ENCODE measurements at regions of chr20 and their contacts with region 1.

Region 1: DNA sequence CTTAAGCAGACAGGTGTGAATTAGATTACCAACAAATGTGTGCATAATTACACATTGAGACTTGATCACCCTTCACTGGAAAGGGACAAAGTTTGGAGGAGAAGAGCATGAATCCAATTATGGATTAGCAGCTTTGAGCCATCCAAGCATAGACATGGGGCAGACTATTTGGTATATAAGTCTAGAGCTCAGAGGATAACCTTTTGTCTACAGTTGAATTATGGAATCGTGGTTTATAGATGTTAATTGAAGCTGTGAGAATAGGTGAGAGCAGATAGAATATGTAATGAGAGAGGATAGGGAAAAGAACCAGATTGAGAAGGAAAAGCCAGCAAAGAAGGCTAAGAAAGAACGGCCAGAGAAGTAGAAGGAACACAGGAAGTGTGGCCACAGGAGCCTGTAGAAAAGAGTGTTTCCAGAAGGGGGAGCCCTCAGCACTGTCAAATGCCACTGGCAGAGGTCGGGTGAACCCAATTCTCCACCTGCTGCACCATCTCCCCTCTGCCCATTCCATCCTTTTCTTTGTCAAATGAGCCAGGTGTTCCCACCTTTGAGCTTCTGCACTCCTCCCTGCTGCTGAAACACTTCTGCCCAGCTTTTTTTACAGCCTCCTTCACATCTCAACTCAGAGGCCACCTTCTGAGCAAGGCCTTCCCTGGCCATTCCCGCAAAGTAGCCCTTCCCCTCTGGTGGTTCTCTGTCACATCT is 7.3 kb downstream of the DNTTIP1 start:
- DNase-seq: peak; percentile 83
- ATAC-seq: peak; percentile 99
- H3K4me3 Mint-ChIP-seq: no peak overlapping the region
- H3K27ac Mint-ChIP-seq: peak overlapping the region; percentile 22
- H3K4me1 Mint-ChIP-seq: peaks cover 6% of the 10 kb centered on the region
- H3K27me3 Mint-ChIP-seq: no peaks in the 10 kb centered on the region
- CTCF ChIP-seq: peak; percentile 79

Region 2: GRCh38 chr20:45752746-45753145 is 46.3 kb before region 1 on chr20:
- CTCF ChIA-PET with region 1: no interaction called
- POLR2A ChIA-PET with region 1: no interaction called
- intact Hi-C with region 1: no loop called
- DNase-seq: peak; percentile 54
- ATAC-seq: peak; percentile 79
- H3K4me3 Mint-ChIP-seq: no peak overlapping the region
- H3K27ac Mint-ChIP-seq: peak overlapping the region; percentile 53
- H3K4me1 Mint-ChIP-seq: peaks cover 21% of the 10 kb centered on the region
- H3K27me3 Mint-ChIP-seq: peaks cover 20% of the 10 kb centered on the region
- CTCF ChIP-seq: no peak

Region 3: GRCh38 chr20:45812157-45813020 is 13.3 kb after region 1 on chr20 and contains the start of gene UBE2C:
- CTCF ChIA-PET with region 1: interaction called, 29 read pairs
- POLR2A ChIA-PET with region 1: interaction called, 6 read pairs
- intact Hi-C with region 1: no loop called
- DNase-seq: peak; percentile 98
- ATAC-seq: peak; percentile 100
- H3K4me3 Mint-ChIP-seq: peak within 1 kb of the TSS; percentile 98
- H3K27ac Mint-ChIP-seq: peak within 1 kb of the TSS; percentile 83
- H3K4me1 Mint-ChIP-seq: peaks cover 16% of the 10 kb centered on the region
- H3K27me3 Mint-ChIP-seq: no peaks in the 10 kb centered on the region
- CTCF ChIP-seq: no peak
- total RNA-seq, gene UBE2C: 149 to 151 TPM

Region 4: GRCh38 chr20:45817652-45818194 is 18.6 kb after region 1 on chr20:
- CTCF ChIA-PET with region 1: interaction called, 13 read pairs
- POLR2A ChIA-PET with region 1: interaction called, 6 read pairs
- intact Hi-C with region 1: no loop called
- DNase-seq: no peak
- ATAC-seq: no peak
- H3K4me3 Mint-ChIP-seq: no peak overlapping the region
- H3K27ac Mint-ChIP-seq: no peak overlapping the region
- H3K4me1 Mint-ChIP-seq: peaks cover 10% of the 10 kb centered on the region
- H3K27me3 Mint-ChIP-seq: peaks cover 8% of the 10 kb centered on the region
- CTCF ChIP-seq: no peak

Region 5: DNA sequence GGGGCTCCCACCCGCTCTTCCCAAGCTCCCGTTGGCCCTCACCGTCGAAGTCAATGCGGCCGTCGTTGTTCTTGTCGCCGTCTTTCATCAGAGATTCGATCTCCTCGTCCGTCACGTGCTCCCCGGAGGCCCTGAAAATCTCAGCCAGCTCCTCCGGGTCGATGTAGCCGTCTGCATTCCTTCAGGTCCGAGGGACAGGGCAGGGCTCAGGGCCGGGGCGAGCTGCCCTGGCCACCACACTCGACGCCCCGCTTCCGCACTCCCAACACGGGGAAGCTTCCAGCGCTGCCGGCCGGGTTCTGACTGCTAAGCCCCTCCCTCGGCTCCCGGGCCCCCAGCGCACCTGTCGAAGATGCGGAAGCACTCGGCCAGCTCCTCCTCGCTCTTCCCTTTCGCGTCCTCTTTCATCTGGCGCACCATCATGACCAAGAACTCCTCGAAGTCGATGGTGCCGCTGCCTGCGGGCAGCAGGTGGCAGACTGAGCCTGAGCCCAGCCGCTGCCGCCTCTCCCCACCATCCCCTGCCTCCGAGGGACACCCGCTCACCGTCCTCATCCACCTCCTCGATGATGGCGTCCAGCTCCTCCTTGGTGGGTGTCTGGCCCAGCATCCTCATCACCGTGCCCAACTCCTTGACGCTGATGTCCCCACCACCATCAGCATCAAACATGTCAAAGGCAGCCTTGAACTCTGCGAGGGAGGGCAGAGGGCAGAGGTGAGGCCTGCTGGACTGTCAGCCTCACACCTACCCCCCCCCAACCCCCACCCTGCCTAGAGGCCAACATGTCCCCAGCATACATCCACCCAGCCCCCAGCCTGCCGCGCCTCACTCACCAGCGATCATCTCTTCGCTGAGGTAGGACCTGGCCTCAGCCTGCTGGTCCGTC is 25.1 kb after region 1 on chr20:
- CTCF ChIA-PET with region 1: interaction called, 13 read pairs
- POLR2A ChIA-PET with region 1: no interaction called
- intact Hi-C with region 1: no loop called
- DNase-seq: peak; percentile 66
- ATAC-seq: peak; percentile 89
- H3K4me3 Mint-ChIP-seq: peak overlapping the region; percentile 47
- H3K27ac Mint-ChIP-seq: peak overlapping the region; percentile 62
- H3K4me1 Mint-ChIP-seq: peaks cover 12% of the 10 kb centered on the region
- H3K27me3 Mint-ChIP-seq: peaks cover 27% of the 10 kb centered on the region
- CTCF ChIP-seq: peak; percentile 36

Region 6: DNA sequence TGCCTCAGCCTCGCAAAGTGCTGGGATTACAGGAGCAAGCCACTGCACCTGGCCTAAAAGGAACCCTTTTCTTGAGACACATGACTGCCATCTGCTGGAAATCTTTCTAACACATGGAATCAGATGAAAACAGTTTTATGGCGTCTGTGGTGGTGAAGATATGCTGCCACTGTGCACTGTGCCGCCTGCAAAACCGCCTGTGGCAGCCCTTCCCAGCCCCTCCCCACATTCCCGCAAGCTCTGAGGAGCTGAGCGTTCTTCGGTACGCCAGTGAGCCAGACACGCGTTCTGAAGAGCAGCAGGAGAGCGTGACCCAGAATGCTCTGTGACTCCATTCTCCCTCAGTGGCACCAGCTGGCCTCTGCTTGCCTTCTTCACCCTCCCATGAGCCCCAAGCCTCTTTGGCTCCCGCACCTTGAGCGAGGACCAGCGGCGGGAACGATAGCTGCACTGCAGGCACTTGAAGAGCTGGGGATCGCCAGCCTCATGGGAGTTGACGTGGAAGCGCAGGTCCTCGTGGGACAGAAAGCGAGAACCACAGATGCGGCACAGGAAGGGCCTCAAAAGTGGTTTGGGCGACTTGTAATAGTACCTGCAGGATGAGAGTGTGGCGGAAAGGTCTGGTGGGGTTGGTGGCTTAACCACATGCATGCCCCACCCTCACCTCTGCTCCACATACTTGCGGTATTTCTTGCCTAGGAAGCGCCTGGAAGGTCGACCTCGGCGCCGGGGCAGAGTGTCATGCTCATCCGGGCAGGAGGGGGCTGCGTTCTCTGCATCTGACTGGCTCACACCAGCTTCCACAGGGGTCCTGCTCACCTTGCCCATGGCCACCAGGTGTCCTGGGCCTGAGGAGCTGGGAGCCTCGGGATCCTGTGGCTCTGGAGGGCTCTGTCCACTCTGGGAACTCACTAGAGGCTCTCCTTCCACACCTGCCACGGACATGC is 164.2 kb after region 1 on chr20:
- CTCF ChIA-PET with region 1: interaction called, 31 read pairs
- POLR2A ChIA-PET with region 1: no interaction called
- intact Hi-C with region 1: no loop called
- DNase-seq: no peak
- ATAC-seq: peak; percentile 58
- H3K4me3 Mint-ChIP-seq: no peak overlapping the region
- H3K27ac Mint-ChIP-seq: no peak overlapping the region
- H3K4me1 Mint-ChIP-seq: no peaks in the 10 kb centered on the region
- H3K27me3 Mint-ChIP-seq: no peaks in the 10 kb centered on the region
- CTCF ChIP-seq: no peak